ENCODE measurements at regions of chr3 and their contacts with region 1.

Region 1: GRCh38 chr3:45140141-45140784 is 5.9 kb downstream of the CDCP1 start:
- DNase-seq: peak; percentile 86
- ATAC-seq: peak; percentile 69
- H3K4me3 ChIP-seq: no peak overlapping the region
- H3K27ac ChIP-seq: peak overlapping the region; percentile 76
- H3K4me1 ChIP-seq: peaks cover 80% of the 10 kb centered on the region
- H3K27me3 ChIP-seq: no peaks in the 10 kb centered on the region
- CTCF ChIP-seq: no peak

Region 2: DNA sequence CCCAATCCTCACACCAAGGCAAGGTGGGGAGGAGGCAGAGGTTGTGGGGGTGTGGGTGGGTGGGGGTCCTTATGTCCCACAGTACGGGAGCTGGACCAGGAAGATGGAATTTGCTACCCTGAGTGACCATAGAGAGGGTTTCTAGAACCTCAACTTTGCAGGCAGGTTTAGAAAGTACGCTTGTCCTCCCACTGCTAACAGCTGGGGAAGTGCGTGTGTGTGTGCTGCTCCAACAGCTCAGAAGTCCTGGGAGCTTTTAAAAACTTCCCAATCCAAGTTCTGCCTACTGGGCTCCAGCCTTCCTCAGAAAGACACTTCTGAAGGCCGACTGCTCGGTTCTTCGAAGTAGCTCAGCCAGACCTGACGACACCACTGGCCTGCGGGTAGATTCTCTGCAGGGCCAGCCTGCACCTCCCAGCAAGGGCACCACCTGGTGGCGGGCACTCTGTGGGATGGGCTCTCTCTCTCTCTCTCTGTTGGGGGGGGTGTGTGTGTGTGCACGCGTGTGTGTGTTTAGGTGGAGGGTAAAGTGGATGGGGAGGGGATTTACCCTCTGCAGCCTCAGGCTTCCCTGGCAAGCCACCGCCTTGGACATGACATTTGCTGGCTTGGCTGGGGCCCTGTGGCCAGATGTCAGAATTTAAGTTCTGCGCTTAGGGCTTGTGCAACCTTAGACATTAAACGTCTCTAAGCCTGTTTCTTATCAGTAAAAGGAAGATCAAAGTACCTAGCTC is 70.2 kb after region 1 on chr3:
- CTCF ChIA-PET with region 1: interaction called, 6 read pairs
- POLR2A ChIA-PET with region 1: interaction called, 14 read pairs
- intact Hi-C with region 1: no loop called
- DNase-seq: peak; percentile 92
- ATAC-seq: peak; percentile 98
- H3K4me3 ChIP-seq: no peak overlapping the region
- H3K27ac ChIP-seq: no peak overlapping the region
- H3K4me1 ChIP-seq: peaks cover 13% of the 10 kb centered on the region
- H3K27me3 ChIP-seq: no peaks in the 10 kb centered on the region
- CTCF ChIP-seq: peak; percentile 92

Measured in PC-3 (cell line).